ENCODE measurements at regions of chr2 and their contacts with region 1.

Region 1: GRCh38 chr2:109242654-109243331 is 113.8 kb downstream of the SH3RF3 start:
- DNase-seq: peak; percentile 57
- H3K4me3 ChIP-seq: no peak overlapping the region
- H3K27ac ChIP-seq: peak overlapping the region in 1 of 2 donors; percentile 66
- H3K4me1 ChIP-seq: peaks cover 33% of the 10 kb centered on the region
- H3K27me3 ChIP-seq: no peaks in the 10 kb centered on the region
- CTCF ChIP-seq: no peak
- POLR2A ChIP-seq: no peak

Region 2: DNA sequence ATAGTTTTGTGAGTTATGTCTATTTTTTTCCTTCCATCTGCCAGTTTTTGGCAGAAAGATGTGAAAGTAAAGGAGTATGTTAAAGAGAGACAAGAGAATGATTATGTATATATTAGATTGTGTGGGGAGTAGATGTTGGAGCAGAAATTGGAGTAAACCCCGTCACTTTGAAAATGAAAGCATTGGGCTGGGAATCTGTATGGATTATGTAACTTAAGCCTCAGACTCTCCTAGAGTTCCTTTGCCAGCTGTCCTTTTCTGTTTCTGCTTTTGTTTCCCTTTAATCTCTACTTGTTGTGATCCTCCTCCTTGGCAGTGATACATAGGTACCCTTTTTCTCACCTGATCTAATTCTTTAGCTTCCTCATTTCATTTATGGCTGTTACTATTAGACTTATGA is 437.0 kb before region 1 on chr2:
- intact Hi-C with region 1: no loop called
- DNase-seq: no peak
- H3K4me3 ChIP-seq: no peak overlapping the region
- H3K27ac ChIP-seq: no peak overlapping the region
- H3K4me1 ChIP-seq: no peaks in the 10 kb centered on the region
- H3K27me3 ChIP-seq: no peaks in the 10 kb centered on the region
- CTCF ChIP-seq: no peak
- POLR2A ChIP-seq: no peak

Region 3: GRCh38 chr2:109173311-109174171 is 69.3 kb before region 1 on chr2:
- intact Hi-C with region 1: loop called (anchors 10 kb)
- DNase-seq: peak; percentile 84
- H3K4me3 ChIP-seq: no peak overlapping the region
- H3K27ac ChIP-seq: peak overlapping the region; percentile 51 to 76
- H3K4me1 ChIP-seq: peaks cover 35% of the 10 kb centered on the region
- H3K27me3 ChIP-seq: no peaks in the 10 kb centered on the region
- CTCF ChIP-seq: no peak
- POLR2A ChIP-seq: no peak

Measured in testis (tissue), 5 donors.